Gastrocnemius medialis (tissue), 4 donors: ENCODE measurements at regions of chr5 and their contacts with region 1.

Region 1: GRCh38 chr5:170747851-170748250 is 35.7 kb upstream of the GABRP start:
- DNase-seq: no peak
- ATAC-seq: no peak
- H3K4me3 ChIP-seq: no peak overlapping the region
- H3K27ac ChIP-seq: no peak overlapping the region
- H3K4me1 ChIP-seq: peaks cover 4 to 14% of the 10 kb centered on the region in 2 donors
- H3K27me3 ChIP-seq: peaks cover 3 to 7% (median 4%) of the 10 kb centered on the region in 3 donors
- CTCF ChIP-seq: peak in 1 of 5 experiments; percentile 22
- POLR2A ChIP-seq: no peak

Region 2: GRCh38 chr5:170791325-170791954 is 43.6 kb after region 1 on chr5:
- in situ Hi-C with region 1: no loop called
- intact Hi-C with region 1: loop called (anchors 1 kb)
- DNase-seq: no peak
- ATAC-seq: no peak
- H3K4me3 ChIP-seq: no peak overlapping the region
- H3K27ac ChIP-seq: no peak overlapping the region
- H3K4me1 ChIP-seq: peaks cover 0 to 2% of the 10 kb centered on the region in 2 donors
- H3K27me3 ChIP-seq: no peaks in the 10 kb centered on the region
- CTCF ChIP-seq: peak in 2 of 5 experiments; percentile 37 to 49
- POLR2A ChIP-seq: no peak

Region 3: GRCh38 chr5:171342362-171343111 is 594.7 kb after region 1 on chr5:
- in situ Hi-C with region 1: loop called in 3 of 4 experiments (anchors 25 kb)
- intact Hi-C with region 1: no loop called
- DNase-seq: no peak
- ATAC-seq: no peak
- H3K4me3 ChIP-seq: no peak overlapping the region
- H3K27ac ChIP-seq: no peak overlapping the region
- H3K4me1 ChIP-seq: no peaks in the 10 kb centered on the region
- H3K27me3 ChIP-seq: peaks cover 0 to 8% (median 6%) of the 10 kb centered on the region in 3 donors
- CTCF ChIP-seq: peak in 2 of 5 experiments; percentile 17 to 35
- POLR2A ChIP-seq: no peak